Posterior vena cava (tissue), 2 donors: ENCODE measurements at regions of chr1 and their contacts with region 1.

Region 1: GRCh38 chr1:51768971-51769588 is 109.4 kb downstream of the NRDC start:
- DNase-seq: no peak

Region 2: DNA sequence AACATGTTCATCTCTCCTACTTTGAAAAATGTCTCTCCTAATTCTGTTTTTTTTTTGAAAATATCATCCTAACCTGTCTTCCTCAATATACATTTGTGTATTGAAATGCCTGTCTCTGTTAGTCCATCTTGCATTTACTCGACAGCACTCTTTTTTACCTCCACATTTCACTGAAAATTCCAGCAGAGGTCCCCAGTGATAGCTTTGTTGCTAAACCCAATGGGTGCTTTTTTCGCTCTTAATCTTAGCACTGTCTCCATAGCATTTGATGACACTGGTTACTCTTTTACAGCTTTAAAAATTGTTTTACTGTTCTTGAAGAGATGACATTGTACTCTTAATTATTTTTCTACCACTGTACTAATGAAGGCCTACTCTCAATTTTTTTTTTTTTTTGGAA is 141.4 kb before region 1 on chr1:
- intact Hi-C with region 1: loop called (anchors 5 to 10 kb)
- DNase-seq: no peak

Region 3: DNA sequence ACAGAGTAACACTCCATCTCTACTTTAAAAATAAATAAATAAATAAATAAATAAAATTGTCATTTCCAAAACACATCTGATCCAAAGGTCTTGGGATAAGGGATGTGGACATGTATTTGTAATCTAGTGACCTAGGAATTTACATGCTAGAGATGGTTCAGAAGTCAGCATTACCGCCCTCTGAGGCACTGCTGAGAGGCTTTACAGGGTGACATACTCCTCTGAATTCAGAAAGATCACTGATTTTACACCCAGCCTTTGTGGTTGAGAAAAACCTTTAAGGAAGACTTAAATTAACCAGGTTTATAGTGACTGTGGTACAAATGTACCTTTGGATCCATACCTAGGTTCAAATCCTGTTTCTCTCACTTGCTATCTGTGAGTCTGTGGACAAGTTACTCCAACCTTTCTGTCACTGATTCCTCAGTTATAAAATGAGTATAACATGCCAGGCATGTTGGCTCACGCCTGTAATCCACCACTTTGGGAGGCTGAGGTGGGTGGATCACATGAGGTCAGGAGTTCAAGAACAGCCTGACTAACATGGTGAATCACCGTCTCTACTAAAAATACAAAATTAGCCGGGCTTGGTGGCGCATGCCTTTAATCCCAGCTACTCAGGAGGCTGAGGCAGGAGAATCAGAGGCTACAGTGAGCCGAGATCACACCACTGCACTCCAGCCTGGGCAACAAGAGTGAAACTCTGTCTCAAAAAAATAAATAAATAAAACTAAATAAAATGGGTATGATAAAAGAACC is 132.1 kb before region 1 on chr1:
- intact Hi-C with region 1: loop called in 1 of 2 experiments (anchors 10 kb)
- DNase-seq: no peak

Region 4: DNA sequence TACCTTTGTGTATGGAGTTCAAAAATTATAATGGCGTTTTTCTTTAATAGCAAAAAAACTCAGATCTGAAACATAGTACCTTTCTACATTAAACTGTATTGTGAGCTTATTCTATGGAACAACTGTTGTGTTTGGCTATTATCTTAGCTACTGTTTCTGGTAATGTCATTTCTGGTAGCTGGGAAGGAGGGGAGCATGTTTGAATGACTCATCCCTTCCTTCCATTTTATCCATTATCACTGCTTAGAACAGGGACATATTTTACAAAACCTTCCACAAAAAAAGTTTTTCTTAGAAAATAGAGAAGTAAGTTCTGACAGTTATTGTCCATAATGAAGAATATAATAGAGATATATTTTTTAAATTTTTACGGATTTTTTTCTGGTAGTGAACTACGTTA is 18.9 kb before region 1 on chr1:
- intact Hi-C with region 1: no loop called
- DNase-seq: no peak

Region 5: DNA sequence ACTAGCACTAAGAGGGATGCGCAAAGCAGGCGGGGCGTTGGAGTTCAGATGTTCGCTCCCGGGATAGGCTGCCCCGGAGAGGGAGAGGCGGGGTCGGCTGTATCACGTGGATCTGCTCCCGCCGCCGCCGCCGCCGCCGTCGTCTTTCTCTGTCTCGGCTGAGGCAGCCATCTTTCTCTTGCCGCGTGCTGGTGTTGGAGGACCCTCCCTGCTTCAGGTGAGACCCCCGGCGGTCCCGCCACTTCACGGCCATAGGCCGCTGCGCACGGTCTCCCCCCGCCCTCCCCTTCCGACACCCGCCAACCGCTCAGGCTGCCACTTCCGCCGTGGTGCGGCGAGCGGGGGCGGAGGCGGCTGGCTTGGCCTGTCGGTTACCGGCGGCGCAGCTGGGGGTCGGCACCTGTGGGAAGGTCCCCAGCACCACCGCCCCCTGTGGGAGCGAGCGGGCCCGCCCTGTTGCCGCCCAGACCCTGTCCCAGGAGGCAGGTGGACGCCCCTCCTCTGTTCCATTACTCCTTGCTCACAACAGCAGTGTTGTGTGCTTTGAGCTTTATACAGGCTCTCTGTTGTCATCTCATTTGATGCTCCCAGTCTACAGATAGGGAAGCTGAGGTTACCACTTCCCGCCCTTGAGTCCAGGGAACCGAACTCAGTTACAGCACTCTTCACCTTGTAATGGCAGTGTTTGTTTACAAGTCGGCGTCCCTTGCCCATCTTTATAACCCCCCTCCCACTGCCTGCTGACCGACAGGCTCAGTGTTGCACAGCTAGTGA is 287.3 kb after region 1 on chr1 and contains the start of gene BTF3L4:
- intact Hi-C with region 1: no loop called
- DNase-seq: peak; percentile 98
- total RNA-seq, gene BTF3L4: 36.6 to 41.5 TPM